ENCODE measurements at regions of chr16 and their contacts with region 1.

Region 1: GRCh38 chr16:56964243-56965148 is 2.7 kb downstream of the CETP start:
- DNase-seq: peak; percentile 96
- H3K4me3 Mint-ChIP-seq: no peak overlapping the region
- H3K27ac Mint-ChIP-seq: no peak overlapping the region
- H3K4me1 Mint-ChIP-seq: peaks cover 20% of the 10 kb centered on the region
- H3K27me3 Mint-ChIP-seq: peaks cover 3% of the 10 kb centered on the region

Region 2: DNA sequence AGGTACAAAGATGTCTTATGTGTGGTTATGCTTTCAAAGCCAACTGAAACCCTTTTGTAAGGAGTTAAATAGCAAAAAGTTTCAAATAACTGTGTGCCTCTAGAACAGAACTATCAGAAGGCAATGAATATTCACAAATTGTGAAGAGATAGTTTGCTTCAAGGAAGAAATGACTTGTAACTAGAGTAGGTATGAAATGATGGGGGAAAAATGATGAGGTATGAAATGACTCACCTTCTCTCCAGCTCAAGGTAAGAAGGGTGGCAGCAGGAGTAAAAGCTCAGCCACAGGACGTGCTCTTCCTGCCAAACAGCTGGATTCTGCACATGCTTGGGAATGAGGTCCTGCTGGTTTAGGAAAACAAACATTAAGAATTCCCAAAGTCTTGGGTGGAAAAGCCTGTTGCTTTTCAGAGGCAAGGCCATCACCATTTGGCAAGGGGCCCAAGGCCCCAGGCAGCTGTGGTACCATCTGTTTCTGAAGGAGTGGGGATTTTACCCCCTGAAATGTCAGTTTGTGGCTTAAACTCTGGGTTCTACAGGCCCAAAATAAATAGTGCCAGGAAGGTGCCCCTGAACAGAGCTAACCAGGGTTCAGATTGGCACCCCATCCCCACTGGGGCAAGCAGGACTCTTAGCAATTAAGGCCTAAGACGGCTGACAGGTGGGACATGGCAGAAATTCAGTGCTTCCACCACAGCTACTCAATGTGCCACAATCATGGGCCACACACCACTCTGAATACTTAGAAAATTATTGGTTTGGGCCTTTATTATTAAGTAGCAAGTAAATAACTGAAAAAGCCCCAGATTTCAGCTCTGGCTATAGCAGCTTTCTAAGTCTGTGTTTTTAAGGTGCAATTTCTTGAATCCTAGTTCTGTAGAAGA is 19.3 kb before region 1 on chr16:
- CTCF ChIA-PET with region 1: interaction called, 28 read pairs
- POLR2A ChIA-PET with region 1: no interaction called
- DNase-seq: no peak
- H3K4me3 Mint-ChIP-seq: no peak overlapping the region
- H3K27ac Mint-ChIP-seq: peak overlapping the region; percentile 25
- H3K4me1 Mint-ChIP-seq: peaks cover 39% of the 10 kb centered on the region
- H3K27me3 Mint-ChIP-seq: no peaks in the 10 kb centered on the region

Region 3: GRCh38 chr16:56950881-56951771 is 13.4 kb before region 1 on chr16:
- CTCF ChIA-PET with region 1: interaction called, 28 read pairs
- POLR2A ChIA-PET with region 1: interaction called, 3 read pairs
- DNase-seq: peak; percentile 64
- H3K4me3 Mint-ChIP-seq: no peak overlapping the region
- H3K27ac Mint-ChIP-seq: no peak overlapping the region
- H3K4me1 Mint-ChIP-seq: peaks cover 18% of the 10 kb centered on the region
- H3K27me3 Mint-ChIP-seq: no peaks in the 10 kb centered on the region

Region 4: DNA sequence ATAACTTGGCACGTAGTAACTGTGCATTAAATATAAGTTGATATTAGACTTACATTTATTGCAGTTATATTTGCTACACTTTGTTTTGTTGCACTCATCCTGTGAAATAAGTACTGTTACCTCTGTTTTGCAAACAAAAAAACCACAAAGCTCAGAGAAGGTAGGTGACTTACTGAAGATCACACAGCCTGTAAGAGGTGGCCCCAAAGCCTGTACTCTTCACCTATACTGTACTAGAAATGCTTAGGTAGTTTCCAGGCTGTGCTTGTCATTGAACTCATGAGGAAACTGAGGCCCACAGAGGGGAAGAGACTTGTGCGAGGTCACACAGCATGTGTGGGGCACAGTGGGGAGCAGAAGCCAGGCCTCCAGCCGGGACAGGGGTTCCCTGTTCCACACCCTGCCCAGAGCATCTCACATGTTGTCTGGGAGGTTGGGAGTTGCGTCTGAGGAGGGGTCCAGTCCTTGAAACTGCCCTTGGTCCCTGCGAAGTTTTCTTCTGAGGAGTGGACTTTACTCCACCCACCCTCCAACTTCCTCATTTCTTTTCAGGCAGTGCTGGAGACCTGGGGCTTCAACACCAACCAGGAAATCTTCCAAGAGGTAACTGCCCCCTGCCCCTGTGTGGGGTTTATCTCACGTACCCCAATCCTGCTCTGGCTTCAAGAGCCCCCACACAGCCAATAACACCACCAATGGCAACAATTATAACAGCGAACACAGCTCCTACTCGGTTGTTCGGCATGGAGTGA is 10.2 kb after region 1 on chr16:
- CTCF ChIA-PET with region 1: interaction called, 77 read pairs
- POLR2A ChIA-PET with region 1: no interaction called
- DNase-seq: no peak
- H3K4me3 Mint-ChIP-seq: no peak overlapping the region
- H3K27ac Mint-ChIP-seq: peak overlapping the region; percentile 67
- H3K4me1 Mint-ChIP-seq: peaks cover 30% of the 10 kb centered on the region
- H3K27me3 Mint-ChIP-seq: no peaks in the 10 kb centered on the region

Region 5: DNA sequence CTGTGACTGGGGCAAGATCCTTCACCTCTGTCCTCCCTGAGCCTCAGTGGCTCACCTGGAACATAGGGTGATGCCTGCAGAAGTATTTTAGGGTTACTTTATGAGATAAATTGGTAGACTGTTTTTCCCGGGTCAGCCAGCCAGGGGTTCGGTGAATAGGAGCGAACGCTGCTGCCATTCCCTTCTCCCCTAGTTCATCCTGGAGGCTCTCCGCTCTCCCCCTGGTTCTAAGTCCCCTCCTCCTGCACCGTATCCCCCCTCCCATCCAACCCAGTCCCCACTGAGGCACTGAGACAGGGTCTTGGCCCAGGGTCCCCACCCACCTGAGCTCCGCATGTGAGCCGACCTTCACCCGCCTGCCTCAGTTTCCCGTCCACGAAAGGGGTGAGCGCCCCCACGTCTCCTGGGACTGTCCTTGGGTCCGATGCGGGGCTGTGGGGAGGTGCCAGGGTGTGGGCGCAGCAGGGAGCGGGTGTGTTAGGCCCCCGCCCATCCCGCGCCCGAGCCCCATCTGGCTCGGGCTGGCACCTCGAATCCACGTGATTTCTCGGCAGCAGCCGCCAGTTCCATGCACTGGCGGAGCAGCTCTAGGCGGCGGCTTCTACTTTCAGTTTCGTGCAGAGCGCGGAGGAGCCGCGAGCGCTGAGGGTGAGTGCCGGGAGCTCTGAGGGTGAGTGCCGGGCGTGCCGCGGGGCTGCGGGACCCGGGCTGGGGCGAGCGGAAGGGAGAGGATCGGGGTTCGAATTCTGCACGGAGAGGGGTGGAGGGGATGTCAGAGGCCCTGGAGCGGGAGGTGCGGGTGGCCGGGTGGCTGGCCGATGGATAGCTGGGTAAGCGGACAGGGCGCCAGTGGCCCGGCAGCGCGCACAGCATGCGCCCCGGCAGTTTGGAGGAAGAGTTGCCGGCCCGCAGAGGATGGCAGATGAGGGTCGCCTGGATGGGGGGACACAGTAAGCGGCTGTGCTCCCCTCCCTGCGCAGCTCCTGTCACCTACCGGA is 24.8 kb after region 1 on chr16 and contains the start of gene NLRC5:
- CTCF ChIA-PET with region 1: interaction called, 123 read pairs
- POLR2A ChIA-PET with region 1: no interaction called
- DNase-seq: peak; percentile 97
- H3K4me3 Mint-ChIP-seq: peak within 1 kb of the TSS; percentile 100
- H3K27ac Mint-ChIP-seq: peak within 1 kb of the TSS; percentile 99
- H3K4me1 Mint-ChIP-seq: peaks cover 69% of the 10 kb centered on the region
- H3K27me3 Mint-ChIP-seq: no peaks in the 10 kb centered on the region
- total RNA-seq, gene NLRC5: 428 to 468 TPM

Region 6: GRCh38 chr16:57003439-57004386 is 39.2 kb after region 1 on chr16:
- CTCF ChIA-PET with region 1: no interaction called
- POLR2A ChIA-PET with region 1: no interaction called
- DNase-seq: no peak
- H3K4me3 Mint-ChIP-seq: no peak overlapping the region
- H3K27ac Mint-ChIP-seq: peak overlapping the region; percentile 68
- H3K4me1 Mint-ChIP-seq: peaks cover 84% of the 10 kb centered on the region
- H3K27me3 Mint-ChIP-seq: no peaks in the 10 kb centered on the region

Region 7: GRCh38 chr16:57045694-57046381 is 81.3 kb after region 1 on chr16:
- CTCF ChIA-PET with region 1: interaction called, 11 read pairs
- POLR2A ChIA-PET with region 1: no interaction called
- DNase-seq: no peak
- H3K4me3 Mint-ChIP-seq: no peak overlapping the region
- H3K27ac Mint-ChIP-seq: peak overlapping the region; percentile 68
- H3K4me1 Mint-ChIP-seq: peaks cover 37% of the 10 kb centered on the region
- H3K27me3 Mint-ChIP-seq: no peaks in the 10 kb centered on the region